Heart left ventricle (tissue), 16 donors: ENCODE measurements at regions of chr12 and their contacts with region 1.

Region 1: DNA sequence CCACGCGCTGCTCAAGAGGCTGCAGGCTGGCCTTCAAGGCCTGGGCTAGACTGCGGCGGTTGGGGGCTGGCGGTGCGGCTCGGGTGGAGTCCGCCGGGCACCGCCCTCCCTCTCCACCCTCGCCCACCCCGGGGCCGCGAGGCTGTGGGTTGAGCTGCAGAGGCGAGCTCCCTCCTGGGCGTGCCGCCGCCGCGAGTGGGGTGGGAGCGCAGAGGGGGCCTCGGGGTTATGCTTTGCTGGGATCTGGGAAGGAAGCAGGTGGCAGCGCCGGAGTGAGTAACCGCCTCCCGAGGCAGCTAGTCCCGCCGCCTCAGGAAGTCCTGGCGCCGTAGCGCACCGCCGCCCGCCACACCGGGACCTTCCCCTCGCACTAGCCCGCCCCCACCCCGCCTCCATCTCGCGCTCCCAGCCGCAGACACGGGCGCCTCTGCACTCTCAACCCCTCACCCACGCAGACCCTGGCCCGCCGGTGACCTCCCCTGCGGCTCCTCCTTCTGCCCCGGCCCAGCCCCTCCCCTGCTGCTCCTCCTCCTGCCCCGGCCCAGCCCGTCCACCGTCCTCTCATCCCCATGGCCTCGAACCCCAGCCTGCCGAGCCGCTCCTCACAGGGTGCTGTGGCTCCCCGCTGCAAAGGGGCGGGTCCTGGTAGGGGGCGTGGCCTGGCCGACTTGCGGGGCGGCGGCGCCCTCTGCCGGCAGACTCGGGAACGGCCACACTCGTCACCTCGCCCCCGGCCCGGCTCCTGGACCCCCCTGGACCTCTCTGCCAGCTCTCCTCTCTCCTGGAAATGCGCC is 16.6 kb downstream of the TAMALIN start:
- DNase-seq: peak; percentile 87 to 95 (median 90)
- ATAC-seq: peak; percentile 26 to 62 (median 50)
- H3K4me3 ChIP-seq: peak overlapping the region; percentile 32 to 62 (median 55)
- H3K27ac ChIP-seq: peak overlapping the region; percentile 16 to 94 (median 68)
- H3K4me1 ChIP-seq: peaks cover 0 to 54% (median 35%) of the 10 kb centered on the region in 12 donors
- H3K27me3 ChIP-seq: no peaks in the 10 kb centered on the region
- CTCF ChIP-seq: peak; percentile 92 to 98 (median 94)
- POLR2A ChIP-seq: peak in 1 of 2 donors; percentile 20

Region 2: GRCh38 chr12:51898937-51899336 is 124.4 kb before region 1 on chr12:
- intact Hi-C with region 1: loop called in 1 of 10 experiments (anchors 5 kb)
- DNase-seq: peak in 1 of 5 donors; percentile 37
- ATAC-seq: no peak
- H3K4me3 ChIP-seq: no peak overlapping the region
- H3K27ac ChIP-seq: peak overlapping the region in 2 of 12 donors; percentile 40 to 53
- H3K4me1 ChIP-seq: peaks cover 5 to 44% (median 31%) of the 10 kb centered on the region in 12 donors
- H3K27me3 ChIP-seq: no peaks in the 10 kb centered on the region
- CTCF ChIP-seq: no peak
- POLR2A ChIP-seq: no peak

Region 3: GRCh38 chr12:51994959-51995358 is 28.4 kb before region 1 on chr12:
- intact Hi-C with region 1: loop called in 1 of 10 experiments (anchors 2 kb)
- DNase-seq: no peak
- ATAC-seq: no peak
- H3K4me3 ChIP-seq: no peak overlapping the region
- H3K27ac ChIP-seq: no peak overlapping the region
- H3K4me1 ChIP-seq: peaks cover 0 to 2% (median 0%) of the 10 kb centered on the region in 12 donors
- H3K27me3 ChIP-seq: no peaks in the 10 kb centered on the region
- CTCF ChIP-seq: no peak
- POLR2A ChIP-seq: no peak

Region 4: DNA sequence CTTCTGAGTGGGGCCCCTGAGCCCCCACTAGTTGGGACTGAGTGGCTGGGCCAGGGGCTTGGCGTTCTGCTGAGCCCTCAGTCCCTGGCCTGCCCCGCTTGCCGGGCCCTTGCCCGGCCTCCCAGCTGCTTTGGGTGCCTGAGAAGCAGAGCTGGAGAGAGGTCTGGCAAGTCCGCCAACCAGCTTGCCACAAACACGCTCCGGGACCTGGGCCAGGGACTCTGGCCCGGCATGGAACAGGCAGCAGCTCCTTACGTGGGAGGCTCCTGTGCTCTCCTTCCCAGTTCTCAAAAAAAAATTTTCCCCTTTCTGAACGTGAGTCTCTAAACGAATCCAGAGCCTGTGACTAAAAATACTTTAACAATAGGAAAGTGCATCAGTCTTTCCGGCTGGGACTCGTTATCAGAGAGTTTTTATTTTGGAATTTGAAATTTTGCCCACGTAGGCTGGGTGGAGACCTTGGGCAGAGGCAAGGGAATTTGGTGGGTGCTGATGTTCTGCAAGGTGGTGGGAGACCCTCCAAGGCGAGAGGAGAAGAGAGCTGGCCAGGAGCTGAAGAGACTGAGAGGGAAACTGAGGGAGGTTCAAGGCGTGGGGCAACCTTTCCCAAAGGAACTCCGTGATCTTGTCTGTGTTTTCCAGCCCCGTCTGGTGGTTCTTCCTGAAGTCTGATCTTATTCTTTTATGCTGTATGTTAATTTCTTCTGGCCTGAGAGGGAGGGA is 21.0 kb after region 1 on chr12:
- intact Hi-C with region 1: loop called in 1 of 10 experiments (anchors 2 kb)
- DNase-seq: peak; percentile 90 to 94 (median 92)
- ATAC-seq: peak; percentile 54 to 72 (median 58)
- H3K4me3 ChIP-seq: peak overlapping the region; percentile 31 to 67 (median 51)
- H3K27ac ChIP-seq: peak overlapping the region; percentile 93 to 99 (median 97)
- H3K4me1 ChIP-seq: peaks cover 22 to 98% (median 74%) of the 10 kb centered on the region in 12 donors
- H3K27me3 ChIP-seq: no peaks in the 10 kb centered on the region
- CTCF ChIP-seq: no peak
- POLR2A ChIP-seq: peak; percentile 9 to 70

Region 5: DNA sequence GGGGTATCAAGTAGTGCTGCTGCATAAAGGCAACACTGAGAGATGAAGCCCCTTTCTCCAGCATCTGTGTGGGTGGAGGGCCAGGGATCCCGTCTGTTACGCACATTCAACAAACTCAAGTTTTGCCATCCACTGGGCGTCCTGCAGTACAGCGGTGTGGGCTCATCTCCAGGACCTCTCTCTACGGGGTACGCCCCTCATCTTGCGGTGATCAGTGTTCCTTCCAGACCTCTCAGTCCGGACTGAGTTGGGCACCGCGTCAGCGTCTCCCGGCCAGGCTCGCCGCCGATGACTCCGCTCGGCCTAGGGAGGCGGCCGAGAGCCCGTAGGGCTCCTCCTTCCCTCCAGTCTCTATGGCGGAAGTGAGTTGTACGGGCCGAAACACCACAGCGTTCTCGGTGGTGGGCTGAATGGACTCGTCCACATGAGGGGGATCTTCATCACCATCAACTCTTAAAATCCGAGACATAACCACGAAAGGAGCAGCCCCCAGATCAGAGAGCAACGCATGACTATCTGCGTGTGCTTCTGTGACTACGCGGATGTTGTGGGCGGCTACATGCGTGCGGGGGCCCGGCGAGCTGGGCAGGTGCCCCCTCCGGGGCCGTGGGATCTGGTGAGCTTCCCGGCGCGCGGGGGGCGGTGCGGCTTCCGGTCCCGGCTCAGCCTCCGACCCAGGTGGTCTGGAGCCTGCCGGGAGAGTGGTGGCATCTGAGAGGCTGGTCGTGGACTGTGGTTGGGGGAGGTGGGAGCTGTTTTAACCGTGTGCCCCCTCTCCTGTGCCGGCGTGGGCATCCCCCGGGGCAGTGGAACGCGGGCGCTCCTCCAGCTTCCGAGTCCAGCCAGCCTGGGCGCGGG is 46.2 kb after region 1 on chr12 and contains the start of gene ATG101:
- intact Hi-C with region 1: loop called in 3 of 10 experiments (anchors 1 kb)
- DNase-seq: peak; percentile 91 to 94 (median 93)
- ATAC-seq: peak; percentile 97 to 99 (median 98)
- H3K4me3 ChIP-seq: peak within 1 kb of the TSS; percentile 74 to 97 (median 86)
- H3K27ac ChIP-seq: peak within 1 kb of the TSS; percentile 82 to 97 (median 93)
- H3K4me1 ChIP-seq: peaks cover 9 to 44% (median 29%) of the 10 kb centered on the region in 12 donors
- H3K27me3 ChIP-seq: no peaks in the 10 kb centered on the region
- CTCF ChIP-seq: peak; percentile 51 to 91 (median 74)
- POLR2A ChIP-seq: peak in 1 of 2 donors; percentile 65
- total RNA-seq, gene ATG101: 18.9 to 46.7 (median 24.1) TPM

Region 6: GRCh38 chr12:52091869-52092268 is 68.5 kb after region 1 on chr12:
- intact Hi-C with region 1: no loop called
- DNase-seq: no peak
- ATAC-seq: no peak
- H3K4me3 ChIP-seq: no peak overlapping the region
- H3K27ac ChIP-seq: no peak overlapping the region
- H3K4me1 ChIP-seq: no peaks in the 10 kb centered on the region
- H3K27me3 ChIP-seq: peaks cover 0 to 25% (median 6%) of the 10 kb centered on the region in 9 donors
- CTCF ChIP-seq: no peak
- POLR2A ChIP-seq: no peak

Region 7: GRCh38 chr12:52121824-52122539 is 98.6 kb after region 1 on chr12:
- intact Hi-C with region 1: loop called in 2 of 10 experiments (anchors 1 kb)
- DNase-seq: peak; percentile 62 to 83 (median 75)
- ATAC-seq: peak in 3 of 4 donors; percentile 27 to 53 (median 29)
- H3K4me3 ChIP-seq: no peak overlapping the region
- H3K27ac ChIP-seq: peak overlapping the region in 1 of 12 donors; percentile 23
- H3K4me1 ChIP-seq: peaks cover 0 to 41% (median 21%) of the 10 kb centered on the region in 12 donors
- H3K27me3 ChIP-seq: peaks cover 0 to 17% (median 3%) of the 10 kb centered on the region in 9 donors
- CTCF ChIP-seq: peak; percentile 69 to 88 (median 78)
- POLR2A ChIP-seq: no peak

Region 8: DNA sequence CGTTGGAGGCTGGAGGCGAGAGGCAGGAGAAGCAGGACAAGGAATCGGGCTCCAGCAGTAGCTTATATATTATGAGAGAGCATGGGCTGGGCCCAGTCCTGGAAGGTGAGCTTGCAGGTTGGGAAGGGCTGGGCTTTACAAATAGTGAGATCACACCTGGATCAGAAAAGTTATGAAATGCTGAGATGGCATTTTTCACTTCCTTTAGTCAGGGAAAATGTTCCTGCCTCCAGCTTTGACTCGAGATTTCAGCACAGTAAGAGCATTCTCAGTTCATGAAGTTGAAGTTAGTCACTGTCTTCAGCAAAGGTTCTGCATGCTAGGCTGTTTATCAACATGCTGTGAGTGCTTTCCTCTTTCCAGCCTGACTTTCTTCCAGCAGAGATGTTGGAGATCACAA is 450.4 kb after region 1 on chr12 and contains the start of gene KRT6C:
- intact Hi-C with region 1: no loop called
- DNase-seq: no peak
- ATAC-seq: no peak
- H3K4me3 ChIP-seq: no peak within 1 kb of the TSS
- H3K27ac ChIP-seq: no peak within 1 kb of the TSS
- H3K4me1 ChIP-seq: no peaks in the 10 kb centered on the region
- H3K27me3 ChIP-seq: no peaks in the 10 kb centered on the region
- CTCF ChIP-seq: no peak
- POLR2A ChIP-seq: no peak
- total RNA-seq, gene KRT6C: not detected